ENCODE measurements at regions of chr1 and their contacts with region 1.

Region 1: GRCh38 chr1:114757455-114758250 is at the start of gene CSDE1:
- DNase-seq: peak; percentile 97 to 99
- ATAC-seq: peak; percentile 77 to 92 (median 81)
- H3K4me3 ChIP-seq: peak within 1 kb of the TSS; percentile 95
- H3K4me3 Mint-ChIP-seq: peak within 1 kb of the TSS; percentile 99
- H3K27ac ChIP-seq: peak within 1 kb of the TSS; percentile 96
- H3K27ac Mint-ChIP-seq: peak within 1 kb of the TSS; percentile 99 to 100
- H3K4me1 ChIP-seq: peaks cover 21% of the 10 kb centered on the region
- H3K4me1 Mint-ChIP-seq: peaks cover 43 to 48% of the 10 kb centered on the region in 2 donors
- H3K27me3 ChIP-seq: no peaks in the 10 kb centered on the region
- H3K27me3 Mint-ChIP-seq: no peaks in the 10 kb centered on the region
- CTCF ChIP-seq: no peak
- total RNA-seq, gene CSDE1: 461 to 473 (median 470) TPM

Region 2: DNA sequence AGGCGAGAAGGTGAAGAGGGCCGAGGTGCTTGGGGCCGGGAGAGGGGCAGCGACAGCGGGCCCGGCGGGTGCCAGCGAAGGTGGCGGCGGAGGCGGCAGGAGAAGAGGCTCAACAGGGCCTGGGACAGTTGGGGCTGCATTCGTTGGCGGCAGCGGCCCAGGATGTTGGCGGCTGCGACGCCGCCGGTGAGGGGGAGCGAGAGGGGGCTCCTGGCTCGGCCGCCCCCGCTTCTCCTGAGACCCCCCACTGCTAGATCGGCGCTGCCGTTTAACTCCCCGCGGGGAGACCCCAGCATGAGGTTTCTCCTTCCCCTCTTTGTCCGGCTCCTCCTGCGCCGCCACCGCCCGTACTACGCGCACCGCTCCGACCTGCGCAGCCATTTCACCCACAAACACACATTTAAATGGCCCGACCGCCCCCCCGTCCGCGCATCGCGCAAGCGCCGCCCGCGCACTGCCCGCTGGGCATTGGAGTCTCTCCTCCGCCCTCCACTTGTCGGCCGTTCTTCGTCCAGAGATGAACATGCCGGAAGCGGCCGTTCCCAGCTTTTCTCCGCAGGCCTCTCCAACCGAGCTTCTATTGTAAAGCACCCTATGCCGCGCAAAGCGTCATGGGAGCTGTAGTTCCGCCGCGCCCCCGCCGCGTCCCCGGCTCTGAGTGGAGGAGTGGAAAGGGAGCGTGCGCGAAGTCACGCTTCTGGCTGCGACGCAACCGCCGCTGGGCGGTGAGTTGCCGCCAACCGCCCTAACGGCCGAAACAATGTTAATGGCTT is 945.6 kb before region 1 on chr1 and contains the start of gene RSBN1:
- intact Hi-C with region 1: loop called (anchors 2 kb)
- DNase-seq: peak; percentile 94 to 98
- ATAC-seq: peak; percentile 84 to 97 (median 88)
- H3K4me3 ChIP-seq: peak within 1 kb of the TSS; percentile 85
- H3K4me3 Mint-ChIP-seq: peak within 1 kb of the TSS; percentile 98
- H3K27ac ChIP-seq: peak within 1 kb of the TSS; percentile 97
- H3K27ac Mint-ChIP-seq: peak within 1 kb of the TSS; percentile 95
- H3K4me1 ChIP-seq: peaks cover 8% of the 10 kb centered on the region
- H3K4me1 Mint-ChIP-seq: peaks cover 37 to 38% of the 10 kb centered on the region in 2 donors
- H3K27me3 ChIP-seq: no peaks in the 10 kb centered on the region
- H3K27me3 Mint-ChIP-seq: no peaks in the 10 kb centered on the region
- CTCF ChIP-seq: no peak
- total RNA-seq, gene RSBN1: 30.1 to 37.9 (median 36.5) TPM

Region 3: DNA sequence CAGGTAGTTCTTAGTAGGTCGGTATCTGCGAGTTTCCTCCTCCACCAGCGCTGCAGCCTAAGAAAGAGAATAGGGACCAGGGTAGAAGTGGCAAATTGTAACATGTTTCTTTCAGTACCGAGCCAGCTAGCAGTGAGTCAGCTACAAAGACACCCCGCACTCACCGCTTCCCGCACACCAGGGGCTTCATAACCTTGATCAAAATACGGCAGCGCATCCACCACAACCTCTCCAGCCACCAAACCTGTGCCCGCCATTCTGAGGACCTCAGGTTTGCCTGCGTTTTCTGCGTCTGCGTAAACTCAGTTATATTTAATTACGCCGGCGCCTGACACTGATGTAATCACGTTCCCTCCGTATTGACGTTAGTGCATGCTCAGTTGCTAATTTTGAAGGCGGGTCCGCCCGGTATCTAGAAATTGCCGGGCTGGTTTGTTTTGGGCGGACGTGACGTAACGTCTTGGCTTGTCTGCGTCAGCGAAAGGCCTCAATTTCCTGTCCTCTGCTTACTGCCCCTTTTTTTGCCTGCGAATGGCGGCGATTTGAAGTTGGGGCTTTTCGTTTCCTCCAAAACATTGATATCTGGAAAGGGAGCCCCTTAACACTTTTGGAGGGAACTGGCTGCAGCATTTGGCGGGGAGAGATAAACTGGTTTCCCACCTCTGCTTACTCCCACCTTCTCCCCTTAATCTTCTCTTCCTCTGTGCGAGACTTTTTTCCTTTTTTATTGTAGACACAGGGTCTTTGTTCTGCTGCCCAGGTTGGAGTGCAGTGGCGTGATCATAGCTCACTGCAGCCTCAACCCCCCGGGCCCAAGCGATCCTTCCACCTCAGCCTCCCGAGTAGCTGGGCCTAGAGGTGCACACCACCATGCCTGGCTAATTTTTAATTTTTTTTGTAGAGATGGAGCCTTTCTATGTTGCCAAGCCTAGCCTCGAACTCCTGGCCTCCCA is 176.0 kb before region 1 on chr1 and contains the start of gene BCAS2:
- intact Hi-C with region 1: loop called (anchors 2 kb)
- DNase-seq: peak; percentile 91 to 99
- ATAC-seq: peak; percentile 93 to 97 (median 95)
- H3K4me3 ChIP-seq: peak within 1 kb of the TSS; percentile 75
- H3K4me3 Mint-ChIP-seq: peak within 1 kb of the TSS; percentile 96
- H3K27ac ChIP-seq: peak within 1 kb of the TSS; percentile 95
- H3K27ac Mint-ChIP-seq: peak within 1 kb of the TSS; percentile 98 to 99
- H3K4me1 ChIP-seq: peaks cover 8% of the 10 kb centered on the region
- H3K4me1 Mint-ChIP-seq: peaks cover 30 to 33% of the 10 kb centered on the region in 2 donors
- H3K27me3 ChIP-seq: peaks cover 4% of the 10 kb centered on the region
- H3K27me3 Mint-ChIP-seq: peaks cover 4 to 21% of the 10 kb centered on the region in 2 donors
- CTCF ChIP-seq: no peak
- total RNA-seq, gene BCAS2: 45.5 to 76.7 (median 62.0) TPM

Region 4: GRCh38 chr1:114716304-114717170 is 41.1 kb before region 1 on chr1 and contains the start of gene NRAS:
- intact Hi-C with region 1: loop called (anchors 1 kb)
- DNase-seq: peak; percentile 97
- ATAC-seq: peak; percentile 93 to 99 (median 96)
- H3K4me3 ChIP-seq: peak within 1 kb of the TSS; percentile 89
- H3K4me3 Mint-ChIP-seq: peak within 1 kb of the TSS; percentile 97
- H3K27ac ChIP-seq: peak within 1 kb of the TSS; percentile 96
- H3K27ac Mint-ChIP-seq: peak within 1 kb of the TSS; percentile 98 to 99
- H3K4me1 ChIP-seq: peaks cover 13% of the 10 kb centered on the region
- H3K4me1 Mint-ChIP-seq: peaks cover 25% of the 10 kb centered on the region in 2 donors
- H3K27me3 ChIP-seq: no peaks in the 10 kb centered on the region
- H3K27me3 Mint-ChIP-seq: no peaks in the 10 kb centered on the region
- CTCF ChIP-seq: no peak
- total RNA-seq, gene NRAS: 41.1 to 45.7 (median 43.8) TPM

Region 5: DNA sequence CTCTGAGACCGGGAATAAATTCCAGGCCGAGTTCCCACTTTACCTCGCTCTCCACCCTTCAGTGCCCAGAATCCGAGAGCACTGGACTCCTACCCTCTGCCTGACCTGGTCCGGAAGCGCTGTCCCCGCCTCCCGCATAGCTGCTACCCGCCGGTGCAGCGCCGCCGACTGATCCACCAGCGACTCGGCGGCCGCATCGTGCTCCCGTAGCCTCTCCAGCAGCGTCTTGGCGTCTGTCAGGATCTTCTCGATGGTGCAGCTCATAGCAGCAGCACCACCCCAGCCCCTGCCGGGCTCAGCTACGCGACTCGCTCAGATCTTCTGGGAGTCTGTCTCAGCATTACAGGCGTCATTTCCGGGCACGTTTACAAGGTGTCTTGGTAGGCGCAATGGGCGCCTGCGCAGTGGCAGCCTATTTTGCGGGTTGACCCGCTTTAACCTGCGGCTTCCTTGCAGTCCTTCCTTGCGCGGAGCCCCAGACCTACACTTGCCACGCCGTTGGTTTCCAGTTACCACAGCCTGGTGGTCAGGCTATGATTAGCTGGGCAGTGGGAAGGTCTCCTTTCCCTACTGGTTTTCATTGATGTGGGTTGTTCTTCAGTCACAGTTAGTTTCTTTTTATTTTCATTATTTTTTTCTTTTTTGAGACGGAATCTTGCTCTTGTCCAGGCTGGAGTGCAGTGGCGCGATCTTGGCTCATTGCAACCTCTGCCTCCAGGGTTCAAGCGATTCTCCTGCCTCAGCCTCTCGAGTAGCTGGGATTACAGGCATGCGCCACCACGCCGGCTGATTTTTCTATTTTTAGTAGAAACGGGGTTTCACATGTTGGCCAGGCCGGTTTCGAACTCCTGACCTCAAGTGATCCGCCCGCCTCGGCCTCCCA is 22.9 kb after region 1 on chr1 and contains the start of gene SIKE1:
- intact Hi-C with region 1: loop called (anchors 1 kb)
- DNase-seq: peak; percentile 89 to 98
- ATAC-seq: peak; percentile 95 to 98 (median 96)
- H3K4me3 ChIP-seq: peak within 1 kb of the TSS; percentile 76
- H3K4me3 Mint-ChIP-seq: peak within 1 kb of the TSS; percentile 100
- H3K27ac ChIP-seq: peak within 1 kb of the TSS; percentile 78
- H3K27ac Mint-ChIP-seq: peak within 1 kb of the TSS; percentile 100
- H3K4me1 ChIP-seq: peaks cover 5% of the 10 kb centered on the region
- H3K4me1 Mint-ChIP-seq: peaks cover 25 to 35% of the 10 kb centered on the region in 2 donors
- H3K27me3 ChIP-seq: no peaks in the 10 kb centered on the region
- H3K27me3 Mint-ChIP-seq: peaks cover 6 to 12% of the 10 kb centered on the region in 2 donors
- CTCF ChIP-seq: no peak
- total RNA-seq, gene SIKE1: 53.3 to 57.5 (median 53.4) TPM

Measured in natural killer cell (primary cell).